ENCODE measurements at regions of chr5 and their contacts with region 1.

Region 1: DNA sequence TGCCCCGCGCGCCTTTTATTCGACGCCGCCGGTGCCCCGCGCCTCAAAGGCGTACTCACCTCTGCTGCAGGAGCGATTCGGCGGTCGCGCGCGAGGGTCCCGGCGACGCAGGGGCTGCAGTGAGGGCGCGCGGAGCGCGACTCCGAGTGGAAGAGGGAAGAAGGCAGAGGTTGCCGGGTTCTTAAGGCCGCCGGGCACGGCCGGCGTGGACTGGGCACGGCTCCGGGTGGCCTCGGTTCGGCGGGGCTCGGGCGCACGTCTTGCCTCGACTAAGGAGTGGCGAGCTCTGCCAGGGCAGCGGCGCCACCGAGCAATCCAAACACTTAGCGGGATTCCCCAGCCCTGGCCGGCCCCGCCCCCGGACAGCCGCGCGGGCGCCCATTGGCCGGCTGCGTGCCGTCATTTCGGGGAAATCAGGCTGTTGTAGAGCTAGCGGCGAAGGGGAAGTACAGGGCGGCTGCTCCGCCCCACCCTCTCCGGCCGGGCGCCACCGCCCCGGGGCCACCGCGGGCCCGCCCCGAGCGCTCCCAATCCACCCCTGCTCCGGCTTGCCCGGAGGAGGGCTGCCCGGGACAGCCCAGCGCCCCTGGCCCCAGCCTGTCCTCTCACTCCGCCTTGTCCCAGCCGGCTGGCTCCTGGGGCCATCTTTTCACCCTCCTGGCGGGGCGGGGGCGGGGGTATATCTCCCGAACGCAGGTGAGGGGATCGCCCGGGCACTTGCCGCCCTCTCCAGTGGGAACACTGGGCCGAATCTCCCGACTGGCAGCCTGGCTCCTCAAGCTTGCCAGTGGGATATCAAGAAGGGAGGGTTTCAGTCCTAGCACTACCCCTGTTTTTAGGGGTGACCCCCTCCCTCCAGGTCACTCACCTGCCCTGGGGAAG is at the start of gene IRF1:
- DNase-seq: peak; percentile 82
- H3K4me3 ChIP-seq: peak within 1 kb of the TSS; percentile 75
- H3K27me3 ChIP-seq: no peaks in the 10 kb centered on the region
- CTCF ChIP-seq: no peak
- polyA plus RNA-seq, gene IRF1: 17.9 and 25.5 TPM in 2 replicates

Region 2: DNA sequence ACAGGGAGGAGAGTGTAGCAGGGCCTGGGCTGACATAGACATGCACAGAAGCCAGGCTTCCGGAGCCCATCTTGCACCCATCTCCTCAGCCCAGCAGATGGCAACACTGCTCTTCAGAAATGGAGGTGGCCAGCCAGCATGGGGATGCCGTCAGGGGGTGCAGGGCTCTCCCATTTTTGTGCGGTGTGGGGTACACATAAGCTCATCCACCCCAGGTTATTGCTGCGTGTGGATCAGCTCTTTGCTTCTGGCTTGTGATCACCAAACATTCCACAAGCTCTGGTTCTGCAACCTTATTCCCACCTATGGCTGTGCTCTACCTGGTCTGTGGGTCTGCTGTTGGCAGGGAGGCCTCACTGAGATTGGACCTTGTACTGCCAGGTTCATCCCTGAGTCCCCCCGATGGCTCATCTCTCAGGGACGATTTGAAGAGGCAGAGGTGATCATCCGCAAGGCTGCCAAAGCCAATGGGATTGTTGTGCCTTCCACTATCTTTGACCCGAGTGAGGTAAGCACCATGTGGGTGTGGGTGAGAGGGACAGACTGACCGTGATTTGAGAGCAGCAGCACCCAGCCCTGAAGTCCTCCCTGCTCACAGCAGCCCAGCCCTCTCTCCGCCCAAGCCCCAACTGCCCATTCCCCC is 104.0 kb before region 1 on chr5:
- CTCF ChIA-PET with region 1: interaction called, 255 read pairs
- POLR2A ChIA-PET with region 1: interaction called, 3 read pairs
- DNase-seq: no peak
- H3K4me3 ChIP-seq: no peak overlapping the region
- H3K27me3 ChIP-seq: no peaks in the 10 kb centered on the region
- CTCF ChIP-seq: peak; percentile 87

Region 3: DNA sequence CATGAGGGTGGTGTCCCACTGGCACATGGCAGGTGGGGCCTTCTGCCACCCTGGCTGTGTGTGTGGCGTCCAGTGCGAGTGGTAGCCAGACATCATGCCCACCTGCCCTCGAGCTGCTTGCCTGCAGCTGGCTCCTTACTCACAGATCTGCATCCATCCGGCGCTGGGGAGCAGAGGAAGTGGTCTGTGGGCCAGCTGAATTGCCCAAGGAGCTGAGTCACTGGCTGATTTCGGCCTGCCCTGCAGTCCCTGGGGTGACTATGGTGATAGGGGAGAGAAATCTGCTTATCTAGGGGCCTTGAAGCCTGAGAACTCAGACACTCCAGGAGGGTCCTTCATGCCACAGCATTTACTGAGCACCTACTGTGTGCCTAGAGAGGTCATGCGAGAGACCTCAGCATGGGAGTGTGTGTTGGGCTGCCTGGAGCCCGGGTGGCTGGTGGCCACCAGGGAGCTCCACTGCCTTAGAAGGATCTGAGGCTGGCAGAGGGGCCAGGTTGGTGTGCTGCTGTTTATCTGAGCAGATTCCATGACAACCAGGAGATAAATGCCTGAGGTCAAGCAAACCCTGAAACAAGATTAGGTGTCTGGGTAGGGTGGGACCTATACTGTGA is 64.1 kb before region 1 on chr5:
- CTCF ChIA-PET with region 1: interaction called, 77 read pairs
- POLR2A ChIA-PET with region 1: no interaction called
- DNase-seq: peak; percentile 72
- H3K4me3 ChIP-seq: no peak overlapping the region
- H3K27me3 ChIP-seq: no peaks in the 10 kb centered on the region
- CTCF ChIP-seq: peak; percentile 67

Region 4: DNA sequence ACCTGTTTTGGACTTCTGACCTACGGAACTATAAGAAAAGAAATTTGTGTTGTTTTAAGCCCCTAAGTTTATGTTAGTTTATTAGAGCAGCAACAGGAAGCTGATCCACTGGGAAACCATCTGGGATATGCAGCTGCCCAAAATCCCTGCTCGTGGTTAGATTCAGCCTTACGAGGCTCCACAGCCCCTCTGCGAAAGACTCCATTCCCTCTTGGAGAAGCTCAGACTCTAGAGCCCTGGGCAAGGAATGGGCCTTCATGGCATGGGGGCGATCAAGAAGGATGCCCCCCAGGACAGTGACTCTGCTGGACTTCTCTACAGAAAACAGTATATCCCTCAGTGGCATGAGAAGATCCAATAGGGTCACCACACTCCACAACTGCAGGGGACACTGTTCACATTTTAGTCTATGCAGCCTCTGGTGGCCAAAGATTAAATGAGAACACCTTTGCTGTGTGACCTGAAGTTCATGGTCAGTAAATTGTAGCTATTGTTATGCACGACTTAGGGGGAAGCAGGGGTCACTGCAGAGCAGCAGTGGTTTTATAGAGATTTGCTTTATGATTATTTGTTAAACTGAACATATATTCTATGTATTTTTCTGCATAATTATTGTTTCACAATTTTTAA is 21.2 kb before region 1 on chr5:
- CTCF ChIA-PET with region 1: interaction called, 14 read pairs
- POLR2A ChIA-PET with region 1: interaction called, 4 read pairs
- DNase-seq: no peak
- H3K4me3 ChIP-seq: no peak overlapping the region
- H3K27me3 ChIP-seq: no peaks in the 10 kb centered on the region
- CTCF ChIP-seq: no peak

Region 5: GRCh38 chr5:132500931-132501630 is 10.4 kb after region 1 on chr5:
- CTCF ChIA-PET with region 1: interaction called, 20 read pairs
- POLR2A ChIA-PET with region 1: interaction called, 6 read pairs
- DNase-seq: no peak
- H3K4me3 ChIP-seq: no peak overlapping the region
- H3K27me3 ChIP-seq: no peaks in the 10 kb centered on the region
- CTCF ChIP-seq: peak; percentile 77

Region 6: GRCh38 chr5:132546108-132546507 is 55.4 kb after region 1 on chr5:
- CTCF ChIA-PET with region 1: no interaction called
- POLR2A ChIA-PET with region 1: no interaction called
- DNase-seq: no peak
- H3K4me3 ChIP-seq: no peak overlapping the region
- H3K27me3 ChIP-seq: peaks cover 8% of the 10 kb centered on the region
- CTCF ChIP-seq: no peak

Region 7: DNA sequence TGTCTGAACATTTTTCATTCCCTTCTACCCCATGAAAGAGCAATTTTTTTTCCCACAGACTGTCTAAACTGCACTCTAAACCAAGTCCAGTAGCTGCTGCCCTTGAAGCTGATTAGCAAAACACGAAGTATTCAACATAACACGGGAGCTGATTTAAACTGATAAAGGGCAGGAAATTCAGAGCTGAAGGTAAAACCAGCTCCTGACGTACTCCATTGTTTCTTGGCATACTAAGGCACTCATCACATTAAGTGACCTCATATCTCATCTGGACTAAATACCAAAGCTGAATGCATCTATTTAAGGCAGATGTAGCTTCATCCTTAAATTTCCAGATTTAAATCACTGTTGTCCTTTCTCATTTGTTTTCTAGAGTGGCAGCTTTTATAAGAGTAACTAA is 363.6 kb after region 1 on chr5:
- CTCF ChIA-PET with region 1: no interaction called
- POLR2A ChIA-PET with region 1: no interaction called
- DNase-seq: no peak
- H3K4me3 ChIP-seq: no peak overlapping the region
- H3K27me3 ChIP-seq: no peaks in the 10 kb centered on the region
- CTCF ChIP-seq: no peak